ENCODE measurements at regions of chr12 and their contacts with region 1.

Region 1: GRCh38 chr12:49842519-49843352 is at the start of gene BCDIN3D:
- DNase-seq: peak; percentile 79
- ATAC-seq: peak; percentile 82
- H3K4me3 Mint-ChIP-seq: peak within 1 kb of the TSS; percentile 92
- H3K27ac Mint-ChIP-seq: peak within 1 kb of the TSS; percentile 98
- H3K4me1 Mint-ChIP-seq: peaks cover 13% of the 10 kb centered on the region
- H3K27me3 Mint-ChIP-seq: peaks cover 23% of the 10 kb centered on the region
- CTCF ChIP-seq: no peak
- total RNA-seq, gene BCDIN3D: 1.6 to 3.2 TPM (median 2.4 TPM) in 3 replicates

Region 2: GRCh38 chr12:49808686-49809380 is 33.9 kb before region 1 on chr12:
- CTCF ChIA-PET with region 1: interaction called, 10 read pairs
- POLR2A ChIA-PET with region 1: no interaction called
- DNase-seq: peak; percentile 36
- ATAC-seq: peak; percentile 9; the same call in 1 of the 2 replicates
- H3K4me3 Mint-ChIP-seq: no peak overlapping the region
- H3K27ac Mint-ChIP-seq: peak overlapping the region; percentile 90
- H3K4me1 Mint-ChIP-seq: peaks cover 42% of the 10 kb centered on the region
- H3K27me3 Mint-ChIP-seq: no peaks in the 10 kb centered on the region
- CTCF ChIP-seq: no peak

Region 3: GRCh38 chr12:49828133-49829091 is 14.3 kb before region 1 on chr12 and contains the start of gene NCKAP5L:
- CTCF ChIA-PET with region 1: interaction called, 20 read pairs
- POLR2A ChIA-PET with region 1: interaction called, 6 read pairs
- DNase-seq: peak; percentile 97
- ATAC-seq: peak; percentile 89
- H3K4me3 Mint-ChIP-seq: peak within 1 kb of the TSS; percentile 93
- H3K27ac Mint-ChIP-seq: peak within 1 kb of the TSS; percentile 100
- H3K4me1 Mint-ChIP-seq: peaks cover 33% of the 10 kb centered on the region
- H3K27me3 Mint-ChIP-seq: no peaks in the 10 kb centered on the region; the same call in 1 of the 2 replicates
- CTCF ChIP-seq: no peak
- total RNA-seq, gene NCKAP5L: 22.1 to 27.8 TPM (median 22.4 TPM) in 3 replicates

Region 4: DNA sequence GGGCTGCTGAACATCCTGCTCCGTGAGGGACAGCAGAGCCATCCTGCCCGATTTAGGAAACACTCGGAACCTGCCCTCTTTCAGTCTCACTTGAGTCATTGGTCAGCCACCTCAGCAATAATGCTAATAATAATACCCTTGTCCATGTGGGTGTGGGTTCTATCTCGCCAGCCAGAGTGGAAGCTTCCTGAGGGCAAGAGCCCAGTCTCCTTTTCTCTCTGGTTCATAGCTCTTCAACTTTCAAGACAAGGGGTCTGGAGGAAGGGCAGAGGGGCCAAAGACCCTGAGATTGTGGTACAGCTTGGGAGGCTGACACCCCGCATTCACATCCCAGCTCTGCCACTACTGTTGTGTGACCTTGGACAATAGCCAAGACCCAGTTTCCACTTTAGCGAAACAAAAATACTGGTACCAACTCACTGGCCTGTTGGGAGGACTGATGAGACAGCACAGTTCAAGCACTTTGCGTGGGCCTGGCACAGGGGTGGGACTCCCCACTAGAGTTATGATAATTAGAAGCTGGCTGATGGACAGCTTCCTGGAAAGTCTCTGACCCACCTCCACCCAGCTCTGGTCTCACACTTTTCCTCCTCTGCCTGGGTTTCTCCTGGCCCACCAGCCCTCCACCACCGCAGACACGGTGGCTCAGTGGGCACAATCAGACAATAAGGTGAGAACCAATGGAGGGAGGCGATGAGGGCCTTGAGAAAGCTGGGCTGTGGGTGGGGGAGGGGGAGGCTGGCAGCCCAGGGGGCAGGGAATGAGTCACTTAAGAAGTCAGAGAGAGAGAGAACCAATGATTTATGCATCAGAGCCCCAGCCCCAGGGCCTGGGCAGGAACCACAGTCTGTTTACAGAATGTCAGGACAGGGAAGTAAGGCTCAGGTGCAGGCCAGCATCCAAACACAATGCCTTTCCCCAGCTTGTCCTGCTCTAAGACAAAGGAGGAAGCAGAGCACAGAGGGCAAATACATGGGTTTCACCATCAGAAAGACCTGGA is 51.3 kb after region 1 on chr12:
- CTCF ChIA-PET with region 1: interaction called, 3 read pairs
- POLR2A ChIA-PET with region 1: interaction called, 10 read pairs
- DNase-seq: no peak
- ATAC-seq: peak; percentile 19
- H3K4me3 Mint-ChIP-seq: no peak overlapping the region
- H3K27ac Mint-ChIP-seq: no peak overlapping the region
- H3K4me1 Mint-ChIP-seq: peaks cover 12% of the 10 kb centered on the region
- H3K27me3 Mint-ChIP-seq: peaks cover 7% of the 10 kb centered on the region; the same call in 1 of the 2 replicates
- CTCF ChIP-seq: no peak